Activated CD4-positive, alpha-beta T cell treated with anti-CD3 and anti-CD28 coated beads, Interleukin-2, amount 10 ng/mL, durations not matched to agents 24 days and 14 days (primary cell): ENCODE measurements at regions of chr17 and their contacts with region 1.

Region 1: GRCh38 chr17:80605326-80606066 is 60.9 kb downstream of the RPTOR start:
- DNase-seq: peak; percentile 74
- H3K4me3 Mint-ChIP-seq: peak overlapping the region; percentile 17
- H3K27ac Mint-ChIP-seq: peak overlapping the region; percentile 86
- H3K4me1 Mint-ChIP-seq: peaks cover 56% of the 10 kb centered on the region
- H3K27me3 Mint-ChIP-seq: no peaks in the 10 kb centered on the region

Region 2: GRCh38 chr17:80591788-80592187 is 13.7 kb before region 1 on chr17:
- intact Hi-C with region 1: loop called (anchors 2 kb)
- DNase-seq: no peak
- H3K4me3 Mint-ChIP-seq: peak overlapping the region; percentile 50
- H3K27ac Mint-ChIP-seq: peak overlapping the region; percentile 62
- H3K4me1 Mint-ChIP-seq: peaks cover 48% of the 10 kb centered on the region
- H3K27me3 Mint-ChIP-seq: no peaks in the 10 kb centered on the region

Region 3: DNA sequence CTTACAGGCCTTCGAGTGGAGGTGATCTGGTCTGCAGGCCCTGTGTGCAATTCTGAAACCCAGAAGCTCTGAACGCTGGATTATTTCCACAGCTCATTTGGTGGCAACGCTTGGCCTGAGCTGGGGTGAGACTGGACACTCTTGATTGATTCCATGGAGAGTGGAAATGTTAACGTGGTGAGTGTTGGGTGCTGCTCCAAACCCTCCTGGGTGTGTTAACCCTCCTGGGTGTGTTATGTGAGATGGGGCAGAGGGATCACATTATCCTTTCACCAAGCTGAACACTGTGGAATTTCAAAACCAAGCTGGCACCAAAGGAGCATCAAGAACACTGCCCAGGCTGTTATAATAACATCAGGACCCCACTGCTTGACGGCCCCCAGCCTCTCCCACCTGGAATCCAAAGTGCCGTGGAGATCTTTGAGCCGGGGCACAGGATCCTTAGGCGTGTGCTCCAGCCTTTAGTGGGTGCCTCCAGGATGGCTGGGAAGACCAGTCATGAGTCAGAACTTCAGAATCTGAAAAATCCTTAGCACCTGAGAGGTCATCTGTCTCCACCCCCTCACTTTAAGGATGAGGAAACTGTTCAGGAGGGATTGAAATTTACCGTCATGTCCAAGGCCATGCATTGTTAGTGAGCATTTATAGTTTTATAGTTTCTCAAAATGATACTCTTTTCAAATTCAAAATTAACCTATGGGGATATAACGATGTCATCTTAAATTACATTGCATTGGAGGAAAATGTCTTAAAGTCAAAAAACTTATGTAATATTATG is 14.2 kb after region 1 on chr17:
- intact Hi-C with region 1: loop called (anchors 2 kb)
- DNase-seq: no peak
- H3K4me3 Mint-ChIP-seq: no peak overlapping the region
- H3K27ac Mint-ChIP-seq: no peak overlapping the region
- H3K4me1 Mint-ChIP-seq: peaks cover 48% of the 10 kb centered on the region
- H3K27me3 Mint-ChIP-seq: no peaks in the 10 kb centered on the region

Region 4: DNA sequence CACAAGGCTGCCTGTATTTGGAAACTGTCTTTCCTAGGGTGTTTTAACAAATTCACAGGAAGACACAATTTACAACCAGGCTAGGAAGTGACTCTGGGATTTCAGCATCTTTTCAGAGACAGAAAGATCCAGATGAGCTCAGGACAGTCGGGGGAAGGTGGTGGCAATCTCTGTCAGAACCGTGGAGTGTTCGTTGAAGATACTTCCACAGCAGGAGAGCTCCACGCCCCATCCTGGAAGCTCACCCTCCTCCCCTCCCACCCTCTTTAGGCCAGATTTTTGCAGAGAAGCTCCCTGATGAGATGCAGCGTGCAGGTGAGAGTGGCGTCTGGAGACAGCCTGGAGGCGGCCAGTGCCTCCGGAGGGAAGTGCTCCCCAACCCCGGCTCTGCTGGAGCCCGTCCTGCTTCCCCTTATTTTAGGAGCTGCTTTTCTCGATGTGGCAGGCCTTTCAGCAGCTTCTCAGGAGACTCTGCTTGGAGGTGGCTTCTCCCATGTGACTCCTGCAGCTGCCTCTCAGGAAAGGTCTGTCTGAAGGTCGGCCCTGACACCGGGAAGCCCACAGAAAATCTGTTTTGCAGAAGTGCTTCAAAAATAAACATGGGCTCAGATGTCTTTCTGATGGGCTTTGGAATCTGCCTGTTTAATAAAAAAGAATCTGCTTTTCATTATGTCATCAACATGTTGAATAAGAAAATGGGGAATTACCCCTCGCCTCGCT is 199.7 kb after region 1 on chr17:
- intact Hi-C with region 1: no loop called
- DNase-seq: no peak
- H3K4me3 Mint-ChIP-seq: no peak overlapping the region
- H3K27ac Mint-ChIP-seq: peak overlapping the region; percentile 25
- H3K4me1 Mint-ChIP-seq: peaks cover 13% of the 10 kb centered on the region
- H3K27me3 Mint-ChIP-seq: no peaks in the 10 kb centered on the region